ENCODE measurements at regions of chr6 and their contacts with region 1.

Region 1: GRCh38 chr6:97394160-97394748 is 111.2 kb upstream of the MMS22L start:
- H3K4me3 Mint-ChIP-seq: no peak overlapping the region
- H3K27ac Mint-ChIP-seq: no peak overlapping the region
- H3K4me1 Mint-ChIP-seq: no peaks in the 10 kb centered on the region
- H3K27me3 Mint-ChIP-seq: no peaks in the 10 kb centered on the region

Region 2: GRCh38 chr6:96795481-96795880 is 598.8 kb before region 1 on chr6:
- intact Hi-C with region 1: no loop called
- H3K4me3 Mint-ChIP-seq: no peak overlapping the region
- H3K27ac Mint-ChIP-seq: no peak overlapping the region
- H3K4me1 Mint-ChIP-seq: no peaks in the 10 kb centered on the region
- H3K27me3 Mint-ChIP-seq: no peaks in the 10 kb centered on the region

Region 3: GRCh38 chr6:96897383-96898240 is 496.6 kb before region 1 on chr6 and contains the start of gene NDUFAF4:
- intact Hi-C with region 1: loop called (anchors 10 kb)
- H3K4me3 Mint-ChIP-seq: peak within 1 kb of the TSS; percentile 91
- H3K27ac Mint-ChIP-seq: peak within 1 kb of the TSS; percentile 97
- H3K4me1 Mint-ChIP-seq: peaks cover 21% of the 10 kb centered on the region
- H3K27me3 Mint-ChIP-seq: peaks cover 4% of the 10 kb centered on the region

Region 4: DNA sequence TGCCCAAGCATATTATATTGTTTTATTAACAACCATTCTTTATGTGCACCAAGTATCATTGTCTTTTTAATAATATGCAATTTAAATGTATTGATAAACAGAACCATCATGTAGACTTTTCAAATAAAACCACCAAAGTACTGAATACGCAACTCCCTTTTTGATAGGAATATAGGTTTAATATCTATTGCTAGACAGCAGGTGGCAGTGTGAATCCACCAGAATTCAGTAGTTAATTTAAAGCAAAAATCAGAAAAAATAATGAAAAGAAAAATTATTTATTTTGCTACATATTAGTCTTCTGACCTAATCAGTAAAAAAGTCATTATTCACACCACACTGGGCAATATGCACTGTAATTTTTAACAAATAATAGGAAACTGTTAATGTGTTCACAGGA is 326.0 kb before region 1 on chr6:
- intact Hi-C with region 1: loop called (anchors 1 kb)
- H3K4me3 Mint-ChIP-seq: no peak overlapping the region
- H3K27ac Mint-ChIP-seq: no peak overlapping the region
- H3K4me1 Mint-ChIP-seq: no peaks in the 10 kb centered on the region
- H3K27me3 Mint-ChIP-seq: peaks cover 2% of the 10 kb centered on the region

Region 5: DNA sequence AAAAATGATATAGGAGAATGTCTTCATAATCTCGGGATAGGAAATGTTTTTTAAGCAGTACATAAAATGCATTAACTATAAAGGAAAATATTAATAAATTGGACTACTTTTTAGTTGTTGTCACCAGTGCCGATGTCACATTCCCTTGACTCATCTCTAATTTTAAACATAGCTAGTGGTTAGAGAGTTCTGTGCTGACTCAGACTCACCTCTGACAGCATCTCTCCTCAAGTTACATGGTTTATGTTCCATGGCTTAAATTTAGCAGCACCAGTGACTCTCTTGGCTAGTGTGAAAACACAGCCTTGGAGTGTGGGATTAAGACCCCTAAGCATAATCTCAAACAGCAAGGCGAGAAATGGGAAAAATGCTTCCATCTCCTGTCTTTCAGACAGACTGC is 200.6 kb after region 1 on chr6:
- intact Hi-C with region 1: no loop called
- H3K4me3 Mint-ChIP-seq: no peak overlapping the region
- H3K27ac Mint-ChIP-seq: no peak overlapping the region
- H3K4me1 Mint-ChIP-seq: no peaks in the 10 kb centered on the region
- H3K27me3 Mint-ChIP-seq: no peaks in the 10 kb centered on the region